ENCODE measurements at regions of chr4 and their contacts with region 1.

Region 1: GRCh38 chr4:113761620-113762185 is at the start of gene CAMK2D:
- DNase-seq: peak; percentile 86
- ATAC-seq: peak; percentile 81
- total RNA-seq, gene CAMK2D: 214 TPM

Region 2: DNA sequence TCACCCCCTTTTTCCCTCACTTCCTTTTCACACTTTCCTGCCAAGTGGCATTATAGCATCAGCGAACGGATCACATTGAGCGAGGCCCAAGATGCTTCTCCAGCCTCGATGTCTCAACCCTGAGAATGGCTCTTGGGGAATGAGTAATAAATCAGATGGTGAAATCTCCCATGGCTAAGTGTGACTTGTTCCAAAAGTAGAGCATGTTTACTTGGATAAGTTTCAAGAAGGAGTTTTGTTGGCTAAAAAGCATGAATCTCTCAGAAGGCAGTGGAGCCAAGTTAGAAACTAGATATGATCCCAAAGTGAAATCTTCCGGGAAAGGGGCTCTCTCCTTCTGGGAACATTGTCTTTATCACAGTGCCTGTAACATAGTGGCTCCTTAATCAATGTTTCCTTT is 316.4 kb before region 1 on chr4:
- intact Hi-C with region 1: loop called (anchors 5 kb)
- DNase-seq: peak; percentile 65
- ATAC-seq: peak; percentile 85

Region 3: DNA sequence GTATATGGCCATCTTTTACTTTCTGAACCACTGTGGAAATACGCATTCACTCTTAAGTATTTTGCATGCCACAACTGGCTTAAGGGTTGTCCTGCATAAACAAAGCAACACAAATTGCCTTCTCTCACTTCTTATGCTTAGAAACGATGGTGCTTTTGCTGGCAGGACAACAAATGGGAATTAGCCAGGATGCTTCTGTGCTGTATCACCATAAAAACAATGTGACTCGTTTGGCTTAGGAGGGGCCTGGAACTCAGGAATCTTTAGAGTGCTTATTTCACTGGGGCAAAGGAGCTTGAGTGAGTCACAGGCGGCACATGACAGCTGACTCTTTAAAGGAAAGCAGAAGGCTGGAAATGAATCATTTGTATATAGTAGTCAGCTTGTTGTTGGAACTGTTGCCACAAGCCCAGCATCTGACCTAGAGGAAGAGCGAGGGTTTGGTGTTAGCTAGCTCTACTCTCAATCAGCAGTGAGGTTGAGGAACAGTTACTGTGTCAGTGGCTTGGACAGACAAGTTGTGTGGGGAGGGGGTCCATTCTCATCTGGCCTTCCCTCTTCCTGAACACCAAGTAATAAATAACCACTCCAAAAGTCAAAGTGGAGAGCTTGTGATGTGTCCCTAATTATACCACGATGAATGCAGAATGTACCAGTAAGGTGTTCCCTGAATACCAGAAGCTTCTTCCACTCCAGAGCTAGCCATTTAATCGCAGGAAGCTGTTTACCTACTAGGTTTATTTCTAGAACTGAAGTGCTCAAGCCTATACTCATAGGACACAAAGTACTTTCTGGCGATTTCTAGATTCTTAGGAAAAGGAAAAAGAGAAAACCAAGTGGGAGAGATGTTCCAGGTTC is 293.3 kb before region 1 on chr4:
- intact Hi-C with region 1: loop called (anchors 1 kb)
- DNase-seq: peak; percentile 67
- ATAC-seq: peak; percentile 95

Region 4: GRCh38 chr4:113547487-113548042 is 214.1 kb before region 1 on chr4:
- intact Hi-C with region 1: loop called (anchors 2 kb)
- DNase-seq: peak; percentile 86
- ATAC-seq: peak; percentile 98

Region 5: GRCh38 chr4:113636438-113636818 is 125.3 kb before region 1 on chr4:
- intact Hi-C with region 1: loop called (anchors 5 kb)
- DNase-seq: no peak
- ATAC-seq: no peak

Region 6: GRCh38 chr4:113684534-113685091 is 77.1 kb before region 1 on chr4:
- intact Hi-C with region 1: loop called (anchors 2 kb)
- DNase-seq: peak; percentile 65
- ATAC-seq: peak; percentile 96